Activated CD4-positive, alpha-beta memory T cell treated with anti-CD3 and anti-CD28 coated beads for 36 hours (primary cell): ENCODE measurements at regions of chr15 and their contacts with region 1.

Region 1: GRCh38 chr15:33086507-33087121 is 107.9 kb downstream of the FMN1 start:
- DNase-seq: no peak
- H3K4me3 Mint-ChIP-seq: no peak overlapping the region
- H3K27ac Mint-ChIP-seq: no peak overlapping the region
- H3K4me1 Mint-ChIP-seq: no peaks in the 10 kb centered on the region
- H3K27me3 Mint-ChIP-seq: peaks cover 1% of the 10 kb centered on the region

Region 2: GRCh38 chr15:32053719-32054118 is 1032.9 kb before region 1 on chr15:
- CTCF ChIA-PET with region 1: no interaction called
- POLR2A ChIA-PET with region 1: no interaction called
- intact Hi-C with region 1: no loop called
- DNase-seq: no peak
- H3K4me3 Mint-ChIP-seq: no peak overlapping the region
- H3K27ac Mint-ChIP-seq: no peak overlapping the region
- H3K4me1 Mint-ChIP-seq: no peaks in the 10 kb centered on the region
- H3K27me3 Mint-ChIP-seq: peaks cover 8% of the 10 kb centered on the region

Region 3: DNA sequence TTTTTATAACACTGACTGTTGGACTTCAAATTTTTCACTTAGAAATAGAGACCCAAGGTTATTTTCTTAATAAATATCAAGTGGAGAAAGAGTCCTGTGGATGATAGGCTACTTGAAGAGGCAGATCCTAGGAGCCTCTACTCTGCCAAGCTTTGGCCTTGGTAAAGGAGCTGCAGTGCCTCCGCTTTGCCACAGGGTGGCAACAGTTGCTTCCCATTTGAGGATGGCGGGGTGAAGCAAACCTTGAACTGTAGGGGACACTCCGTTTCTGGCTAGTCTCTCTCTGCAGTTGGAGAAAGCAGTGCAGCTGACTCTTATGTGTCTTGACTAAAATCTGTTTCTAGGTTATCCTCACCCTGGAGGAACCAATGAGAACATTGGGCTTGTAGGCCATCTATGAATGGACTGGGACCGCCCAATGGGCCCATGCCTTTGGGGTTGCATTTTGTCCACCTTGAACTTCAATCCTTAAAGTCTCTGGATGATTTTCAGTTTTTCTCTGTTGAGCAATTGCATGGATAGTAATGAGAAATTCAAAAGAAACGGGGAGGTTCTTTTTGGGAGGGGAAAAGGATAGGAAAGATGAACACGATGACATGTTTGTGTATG is 435.3 kb before region 1 on chr15:
- CTCF ChIA-PET with region 1: no interaction called
- POLR2A ChIA-PET with region 1: no interaction called
- intact Hi-C with region 1: no loop called
- DNase-seq: peak; percentile 59
- H3K4me3 Mint-ChIP-seq: no peak overlapping the region
- H3K27ac Mint-ChIP-seq: no peak overlapping the region
- H3K4me1 Mint-ChIP-seq: peaks cover under 1% of the 10 kb centered on the region
- H3K27me3 Mint-ChIP-seq: no peaks in the 10 kb centered on the region

Region 4: DNA sequence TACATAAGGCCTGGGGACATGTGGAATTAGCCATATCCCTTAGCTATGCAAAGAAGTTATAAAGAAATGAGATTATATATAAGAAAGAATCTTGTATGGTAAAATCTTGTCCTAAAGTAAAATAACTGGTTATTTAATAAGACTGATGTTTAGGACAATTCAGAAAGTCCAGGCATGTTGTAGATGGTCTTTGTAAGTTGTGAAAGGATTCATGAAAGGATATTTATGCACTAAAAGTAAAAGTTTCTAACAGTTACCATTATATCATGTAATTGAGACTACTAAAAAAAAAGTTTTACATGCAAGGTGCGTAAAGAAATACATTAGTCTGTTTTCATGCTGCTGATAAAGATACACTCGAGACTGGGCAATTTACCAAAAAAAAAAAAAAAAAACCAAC is 38.4 kb before region 1 on chr15:
- CTCF ChIA-PET with region 1: no interaction called
- POLR2A ChIA-PET with region 1: no interaction called
- intact Hi-C with region 1: no loop called
- DNase-seq: no peak
- H3K4me3 Mint-ChIP-seq: no peak overlapping the region
- H3K27ac Mint-ChIP-seq: no peak overlapping the region
- H3K4me1 Mint-ChIP-seq: no peaks in the 10 kb centered on the region
- H3K27me3 Mint-ChIP-seq: peaks cover 1% of the 10 kb centered on the region

Region 5: GRCh38 chr15:33104212-33104611 is 17.6 kb after region 1 on chr15:
- CTCF ChIA-PET with region 1: interaction called, 11 read pairs
- POLR2A ChIA-PET with region 1: no interaction called
- intact Hi-C with region 1: no loop called
- DNase-seq: peak; percentile 37
- H3K4me3 Mint-ChIP-seq: no peak overlapping the region
- H3K27ac Mint-ChIP-seq: no peak overlapping the region
- H3K4me1 Mint-ChIP-seq: peaks cover 3% of the 10 kb centered on the region
- H3K27me3 Mint-ChIP-seq: peaks cover 15% of the 10 kb centered on the region

Region 6: DNA sequence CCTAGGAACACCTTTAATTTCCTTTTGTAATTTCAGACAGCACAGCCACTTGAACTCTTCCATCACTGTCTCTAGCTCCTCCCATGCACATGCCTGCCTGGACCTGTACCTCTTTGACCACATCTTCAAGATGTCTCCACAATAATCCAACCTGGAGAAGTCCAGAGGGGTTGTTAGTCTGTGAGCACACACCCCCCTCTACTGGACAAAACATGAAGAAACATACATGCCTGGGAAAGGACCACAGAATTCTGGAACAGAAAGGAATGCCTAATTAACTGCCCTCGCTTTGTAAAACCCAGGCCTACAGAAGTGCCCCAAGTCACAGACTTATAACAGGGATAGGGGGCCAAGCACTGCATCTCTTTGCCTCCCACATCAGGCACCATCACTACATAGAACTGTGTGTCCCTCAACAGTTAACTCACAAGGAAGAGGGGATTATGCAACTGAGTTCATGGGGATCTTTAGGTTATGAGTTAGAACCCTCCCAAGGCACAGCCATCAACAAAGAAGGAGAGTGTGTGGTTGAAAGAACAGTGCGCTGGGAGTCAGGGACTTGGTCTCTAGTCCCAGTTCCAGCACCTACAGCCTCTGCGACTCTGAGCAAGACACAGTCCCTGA is 46.2 kb after region 1 on chr15:
- CTCF ChIA-PET with region 1: interaction called, 29 read pairs
- POLR2A ChIA-PET with region 1: no interaction called
- intact Hi-C with region 1: loop called (anchors 2 kb)
- DNase-seq: no peak
- H3K4me3 Mint-ChIP-seq: no peak overlapping the region
- H3K27ac Mint-ChIP-seq: no peak overlapping the region
- H3K4me1 Mint-ChIP-seq: no peaks in the 10 kb centered on the region
- H3K27me3 Mint-ChIP-seq: no peaks in the 10 kb centered on the region

Region 7: GRCh38 chr15:33296856-33297255 is 210.2 kb after region 1 on chr15:
- CTCF ChIA-PET with region 1: no interaction called
- POLR2A ChIA-PET with region 1: no interaction called
- intact Hi-C with region 1: no loop called
- DNase-seq: no peak
- H3K4me3 Mint-ChIP-seq: no peak overlapping the region
- H3K27ac Mint-ChIP-seq: no peak overlapping the region
- H3K4me1 Mint-ChIP-seq: no peaks in the 10 kb centered on the region
- H3K27me3 Mint-ChIP-seq: peaks cover 2% of the 10 kb centered on the region

Region 8: DNA sequence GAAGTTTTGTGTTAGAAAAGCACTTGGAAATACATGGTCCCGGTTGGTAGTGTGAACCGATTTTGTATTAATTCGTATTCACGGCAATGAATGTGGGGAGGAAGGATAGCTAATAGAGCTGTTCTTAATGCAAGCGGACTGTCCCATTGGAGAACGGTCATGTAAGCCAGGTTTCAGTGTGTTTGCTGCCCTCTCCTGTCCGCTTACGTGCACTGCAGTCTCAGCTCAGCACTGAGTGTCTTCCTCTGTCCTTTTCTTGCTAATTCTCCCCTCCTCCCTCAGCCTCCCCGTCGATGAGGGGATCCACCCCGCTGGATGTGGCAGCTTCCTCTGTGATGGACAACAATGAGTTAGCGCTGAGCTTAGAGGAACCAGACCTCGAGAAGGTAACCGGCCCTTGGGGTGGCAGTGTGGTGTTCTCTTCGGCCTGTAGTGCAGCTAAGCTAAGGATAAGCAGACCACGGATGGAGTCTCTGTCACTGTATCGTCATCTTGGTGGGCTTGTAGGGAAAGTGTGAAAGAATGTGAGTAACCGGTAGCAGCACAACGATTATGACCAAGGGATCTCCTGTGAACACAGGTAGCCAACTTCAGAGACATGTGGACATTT is 614.2 kb after region 1 on chr15:
- CTCF ChIA-PET with region 1: interaction called, 18 read pairs
- POLR2A ChIA-PET with region 1: no interaction called
- intact Hi-C with region 1: loop called (anchors 1 kb)
- DNase-seq: peak; percentile 71
- H3K4me3 Mint-ChIP-seq: no peak overlapping the region
- H3K27ac Mint-ChIP-seq: no peak overlapping the region
- H3K4me1 Mint-ChIP-seq: no peaks in the 10 kb centered on the region
- H3K27me3 Mint-ChIP-seq: peaks cover 12% of the 10 kb centered on the region